Naive thymus-derived CD4-positive, alpha-beta T cell (primary cell): ENCODE measurements at regions of chr6 and their contacts with region 1.

Region 1: GRCh38 chr6:151339369-151339768 is 52.0 kb downstream of the ZBTB2 start:
- DNase-seq: no peak
- ATAC-seq: no peak
- H3K4me3 ChIP-seq: no peak overlapping the region
- H3K4me3 Mint-ChIP-seq: no peak overlapping the region
- H3K27ac ChIP-seq: no peak overlapping the region
- H3K27ac Mint-ChIP-seq: no peak overlapping the region
- H3K4me1 ChIP-seq: no peaks in the 10 kb centered on the region
- H3K4me1 Mint-ChIP-seq: peaks cover 0 to 5% (median 4%) of the 10 kb centered on the region in 7 donors
- H3K27me3 ChIP-seq: no peaks in the 10 kb centered on the region
- H3K27me3 Mint-ChIP-seq: peaks cover 0 to 3% (median 0%) of the 10 kb centered on the region in 5 donors

Region 2: DNA sequence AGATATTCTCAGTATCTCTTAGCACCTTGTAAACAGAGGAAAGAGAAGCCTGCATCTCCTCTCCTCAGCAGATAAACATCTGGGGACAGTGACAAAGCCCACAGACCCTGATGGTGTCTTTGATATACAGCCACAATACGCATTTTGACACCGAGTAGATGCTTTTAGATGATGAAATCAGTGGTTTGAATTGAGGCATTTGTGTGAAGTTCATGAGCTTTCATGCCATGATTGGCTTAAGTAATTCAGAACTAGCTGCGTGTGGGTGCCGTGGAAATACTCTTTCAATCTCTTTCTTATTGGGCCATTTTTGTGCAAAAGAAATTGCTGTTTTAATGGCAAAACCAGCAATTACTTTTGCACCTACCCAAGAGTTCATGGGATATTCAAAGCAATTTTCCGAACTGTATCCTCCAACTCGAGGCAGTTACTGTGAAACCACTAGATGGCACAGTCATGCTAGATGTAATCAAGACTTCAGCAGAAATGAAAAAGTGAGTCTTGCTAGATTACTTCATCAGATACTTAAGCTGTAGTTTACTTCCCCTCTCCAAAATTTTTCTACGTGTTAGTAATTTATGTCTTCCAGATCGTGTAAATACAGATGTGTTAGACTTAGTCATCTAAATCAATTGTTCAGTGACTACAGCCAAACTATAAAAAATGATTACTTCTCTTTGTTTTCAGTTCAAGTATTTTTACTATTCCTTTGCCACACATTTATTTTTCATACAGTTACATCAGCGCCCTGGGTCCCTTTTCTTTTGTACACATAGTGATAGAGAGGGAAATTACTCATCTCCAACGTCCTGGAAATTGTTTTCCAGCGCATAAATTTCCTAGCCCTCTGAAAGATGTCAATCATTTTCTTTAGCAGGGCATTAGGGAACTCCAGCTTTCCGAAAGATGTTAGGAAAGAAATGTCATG is 921.2 kb before region 1 on chr6:
- CTCF ChIA-PET with region 1: no interaction called
- POLR2A ChIA-PET with region 1: no interaction called
- intact Hi-C with region 1: loop called in 1 of 2 experiments (anchors 5 kb)
- DNase-seq: peak in 6 of 9 donors; percentile 24 to 56 (median 32)
- ATAC-seq: peak; percentile 81
- H3K4me3 ChIP-seq: peak overlapping the region; percentile 53
- H3K4me3 Mint-ChIP-seq: peak overlapping the region; percentile 65 to 88 (median 80)
- H3K27ac ChIP-seq: no peak overlapping the region
- H3K27ac Mint-ChIP-seq: peak overlapping the region in 2 of 9 donors; percentile 26
- H3K4me1 ChIP-seq: peaks cover 0 to 4% of the 10 kb centered on the region in 2 donors
- H3K4me1 Mint-ChIP-seq: peaks cover 2 to 15% (median 10%) of the 10 kb centered on the region in 7 donors
- H3K27me3 ChIP-seq: no peaks in the 10 kb centered on the region
- H3K27me3 Mint-ChIP-seq: peaks cover 27 to 41% (median 29%) of the 10 kb centered on the region in 5 donors

Region 3: GRCh38 chr6:151014404-151015100 is 324.8 kb before region 1 on chr6:
- CTCF ChIA-PET with region 1: interaction called, 31 read pairs
- POLR2A ChIA-PET with region 1: no interaction called
- intact Hi-C with region 1: loop called (anchors 1 kb)
- DNase-seq: peak; percentile 17 to 61 (median 47)
- ATAC-seq: peak; percentile 83
- H3K4me3 ChIP-seq: no peak overlapping the region
- H3K4me3 Mint-ChIP-seq: peak overlapping the region in 1 of 10 donors; percentile 22
- H3K27ac ChIP-seq: no peak overlapping the region
- H3K27ac Mint-ChIP-seq: peak overlapping the region in 1 of 9 donors; percentile 41
- H3K4me1 ChIP-seq: no peaks in the 10 kb centered on the region
- H3K4me1 Mint-ChIP-seq: peaks cover 0 to 10% (median 0%) of the 10 kb centered on the region in 7 donors
- H3K27me3 ChIP-seq: no peaks in the 10 kb centered on the region
- H3K27me3 Mint-ChIP-seq: no peaks in the 10 kb centered on the region

Region 4: DNA sequence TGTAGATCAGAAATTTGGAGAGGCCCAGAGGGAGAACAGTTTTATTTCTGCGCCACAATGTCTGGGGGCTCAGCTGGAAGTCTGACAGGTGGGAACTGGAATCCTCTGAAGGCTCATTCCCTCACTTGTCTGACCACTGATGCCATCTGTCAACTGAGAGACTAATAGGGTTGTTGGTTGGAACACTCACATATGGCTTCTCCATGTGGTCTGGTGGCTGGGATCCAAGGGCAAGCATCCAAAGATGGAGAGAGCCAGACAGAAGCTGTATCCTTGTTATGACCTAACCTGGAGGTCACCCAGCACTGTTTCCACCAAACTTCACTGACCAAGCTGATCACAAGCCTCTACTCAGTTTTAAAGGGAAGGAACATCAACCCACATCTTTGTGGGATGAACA is 217.5 kb before region 1 on chr6:
- CTCF ChIA-PET with region 1: no interaction called
- POLR2A ChIA-PET with region 1: no interaction called
- intact Hi-C with region 1: no loop called
- DNase-seq: no peak
- ATAC-seq: no peak
- H3K4me3 ChIP-seq: no peak overlapping the region
- H3K4me3 Mint-ChIP-seq: no peak overlapping the region
- H3K27ac ChIP-seq: no peak overlapping the region
- H3K27ac Mint-ChIP-seq: no peak overlapping the region
- H3K4me1 ChIP-seq: no peaks in the 10 kb centered on the region
- H3K4me1 Mint-ChIP-seq: peaks cover 0 to 5% (median 0%) of the 10 kb centered on the region in 7 donors
- H3K27me3 ChIP-seq: no peaks in the 10 kb centered on the region
- H3K27me3 Mint-ChIP-seq: no peaks in the 10 kb centered on the region

Region 5: DNA sequence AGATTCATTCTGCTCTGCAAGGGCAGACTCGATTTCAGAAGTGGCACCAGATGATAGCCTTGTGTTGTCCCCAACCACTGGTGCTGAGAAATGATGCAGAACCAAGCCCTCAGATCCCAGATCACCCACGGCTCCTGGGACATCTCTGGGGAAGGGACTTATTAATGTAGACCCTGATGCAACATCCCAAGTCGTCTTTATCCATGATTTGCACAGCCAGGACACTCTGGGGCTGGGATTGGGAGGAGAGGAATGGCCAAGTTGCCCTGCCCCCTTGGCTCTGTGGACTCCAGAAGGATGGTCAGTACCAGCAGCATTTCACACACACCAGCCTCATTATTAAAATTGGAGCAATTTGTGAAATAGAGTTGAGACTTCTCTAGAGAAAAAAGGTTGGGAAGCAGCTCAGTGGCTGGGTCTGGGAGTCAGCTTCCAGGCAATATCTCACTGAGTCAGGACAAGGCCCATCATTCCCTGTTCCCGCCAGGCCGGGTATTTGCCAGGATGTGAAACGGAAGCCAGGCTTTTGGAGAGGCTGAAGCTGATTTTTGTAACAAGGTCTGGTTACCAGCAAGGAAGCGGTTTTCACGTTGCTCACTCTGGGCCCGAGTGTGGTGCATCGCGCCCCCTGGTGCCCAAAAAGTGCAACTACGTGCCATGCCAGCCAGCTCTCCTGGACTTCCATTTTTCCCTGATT is 15.4 kb before region 1 on chr6:
- CTCF ChIA-PET with region 1: interaction called, 18 read pairs
- POLR2A ChIA-PET with region 1: no interaction called
- intact Hi-C with region 1: no loop called
- DNase-seq: peak; percentile 46 to 76 (median 65)
- ATAC-seq: peak; percentile 85
- H3K4me3 ChIP-seq: no peak overlapping the region
- H3K4me3 Mint-ChIP-seq: peak overlapping the region; percentile 22 to 87 (median 79)
- H3K27ac ChIP-seq: no peak overlapping the region
- H3K27ac Mint-ChIP-seq: peak overlapping the region in 1 of 9 donors; percentile 7
- H3K4me1 ChIP-seq: peaks cover 11 to 12% of the 10 kb centered on the region in 2 donors
- H3K4me1 Mint-ChIP-seq: peaks cover 9 to 27% (median 23%) of the 10 kb centered on the region in 7 donors
- H3K27me3 ChIP-seq: peaks cover 0 to 7% of the 10 kb centered on the region in 2 donors
- H3K27me3 Mint-ChIP-seq: peaks cover 27 to 62% (median 54%) of the 10 kb centered on the region in 5 donors